GM12878 (cell line): ENCODE measurements at regions of chr12 and their contacts with region 1.

Region 1: DNA sequence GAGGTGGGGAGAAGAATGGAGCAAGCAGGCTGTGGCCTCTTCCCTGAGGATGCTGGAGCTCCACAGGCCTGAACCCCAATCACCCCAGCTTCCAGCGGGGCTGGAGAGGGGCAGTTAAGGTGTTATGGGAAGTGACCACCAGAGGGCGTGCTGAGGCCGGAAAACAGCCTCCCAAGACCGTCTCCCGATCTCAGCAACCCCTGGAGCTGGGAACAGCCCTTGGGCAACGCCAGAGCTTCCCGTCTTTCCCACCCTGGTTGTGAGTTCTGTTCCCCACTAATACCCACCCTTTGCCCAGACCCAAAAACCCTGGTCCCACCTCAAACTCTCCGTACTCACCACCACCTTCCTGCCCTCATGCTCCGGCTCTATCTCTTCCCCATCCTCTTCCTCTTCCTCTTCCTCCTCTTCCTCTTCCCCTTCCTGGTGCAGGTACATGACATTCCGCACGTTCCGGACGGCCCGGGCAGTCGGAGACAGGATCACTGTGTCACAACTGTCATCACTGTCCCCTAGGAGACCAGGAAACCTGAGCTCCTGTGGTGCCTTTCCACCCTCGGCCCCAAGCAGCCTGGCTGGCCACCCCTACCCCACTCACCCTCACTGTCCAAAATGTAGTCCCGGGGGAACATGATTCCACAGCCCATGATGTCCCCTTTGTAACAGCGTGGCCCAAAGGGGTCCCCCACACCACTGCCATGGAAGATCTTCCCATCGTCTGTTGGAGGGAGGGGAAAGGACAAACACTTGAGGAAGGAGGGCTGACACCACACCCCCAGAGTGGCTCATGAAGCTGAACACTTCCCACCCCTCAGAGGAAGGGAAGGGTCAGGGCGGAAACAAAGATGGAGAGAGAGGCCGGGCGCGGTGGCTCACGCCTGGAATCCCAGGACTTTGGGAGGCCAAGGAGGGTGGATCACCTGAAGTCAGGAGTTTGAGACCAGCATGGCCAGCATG is 12.9 kb downstream of the SPRYD3 start:
- DNase-seq: no peak
- ATAC-seq: peak; percentile 90
- H3K4me3 ChIP-seq: no peak overlapping the region
- H3K27ac ChIP-seq: no peak overlapping the region
- H3K4me1 ChIP-seq: no peaks in the 10 kb centered on the region
- H3K27me3 ChIP-seq: no peaks in the 10 kb centered on the region
- CTCF ChIP-seq: peak; percentile 72 to 85 (median 85)
- EP300 ChIP-seq: no peak
- POLR2A ChIP-seq: no peak
- RAD21 ChIP-seq: peak; percentile 75

Region 2: DNA sequence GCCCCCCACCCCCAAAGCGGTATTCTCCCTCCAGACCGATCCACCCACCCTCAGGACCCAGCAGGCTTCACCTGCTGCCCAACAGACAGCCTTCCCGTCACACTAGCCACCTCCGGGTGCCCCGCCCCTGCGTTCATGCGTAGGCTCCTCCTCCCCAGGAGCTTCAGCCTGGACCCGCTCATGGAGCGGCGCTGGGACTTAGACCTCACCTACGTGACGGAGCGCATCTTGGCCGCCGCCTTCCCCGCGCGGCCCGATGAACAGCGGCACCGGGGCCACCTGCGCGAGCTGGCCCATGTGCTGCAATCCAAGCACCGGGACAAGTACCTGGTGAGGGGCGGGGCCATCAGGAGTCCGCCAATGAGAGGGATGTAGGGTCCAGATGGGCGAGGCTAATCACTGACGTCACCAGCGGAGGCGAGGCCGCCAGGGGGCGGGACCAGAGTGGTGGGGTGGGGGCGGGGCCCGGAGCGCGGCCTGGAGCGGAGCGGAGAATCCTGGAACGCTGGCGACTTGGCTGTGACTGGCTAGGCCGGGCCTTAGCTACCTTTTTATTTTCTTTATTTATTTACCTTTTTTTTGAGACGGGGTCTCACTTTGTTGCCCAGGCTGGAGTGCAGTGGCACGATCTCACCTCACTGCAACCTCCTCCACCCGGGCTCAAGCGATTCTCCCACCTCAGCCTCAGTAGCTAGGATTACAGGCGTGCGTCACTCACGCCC is 12.0 kb before region 1 on chr12:
- CTCF ChIA-PET with region 1: interaction called, 38 read pairs
- POLR2A ChIA-PET with region 1: interaction called, 3 read pairs
- RAD21 ChIA-PET with region 1: interaction called, 9 read pairs
- SMC1A ChIA-PET with region 1: interaction called, 3 read pairs
- in situ Hi-C with region 1: no loop called
- intact Hi-C with region 1: no loop called
- DNase-seq: peak; percentile 61
- ATAC-seq: peak; percentile 92
- H3K4me3 ChIP-seq: peak overlapping the region; percentile 80
- H3K27ac ChIP-seq: no peak overlapping the region
- H3K4me1 ChIP-seq: peaks cover 8% of the 10 kb centered on the region
- H3K27me3 ChIP-seq: no peaks in the 10 kb centered on the region
- CTCF ChIP-seq: peak in 1 of 3 experiments; percentile 4; a peak in 1 of 6 replicates
- EP300 ChIP-seq: no peak
- POLR2A ChIP-seq: peak; percentile 67; the same call in 1 of the 2 replicates
- RAD21 ChIP-seq: no peak

Region 3: DNA sequence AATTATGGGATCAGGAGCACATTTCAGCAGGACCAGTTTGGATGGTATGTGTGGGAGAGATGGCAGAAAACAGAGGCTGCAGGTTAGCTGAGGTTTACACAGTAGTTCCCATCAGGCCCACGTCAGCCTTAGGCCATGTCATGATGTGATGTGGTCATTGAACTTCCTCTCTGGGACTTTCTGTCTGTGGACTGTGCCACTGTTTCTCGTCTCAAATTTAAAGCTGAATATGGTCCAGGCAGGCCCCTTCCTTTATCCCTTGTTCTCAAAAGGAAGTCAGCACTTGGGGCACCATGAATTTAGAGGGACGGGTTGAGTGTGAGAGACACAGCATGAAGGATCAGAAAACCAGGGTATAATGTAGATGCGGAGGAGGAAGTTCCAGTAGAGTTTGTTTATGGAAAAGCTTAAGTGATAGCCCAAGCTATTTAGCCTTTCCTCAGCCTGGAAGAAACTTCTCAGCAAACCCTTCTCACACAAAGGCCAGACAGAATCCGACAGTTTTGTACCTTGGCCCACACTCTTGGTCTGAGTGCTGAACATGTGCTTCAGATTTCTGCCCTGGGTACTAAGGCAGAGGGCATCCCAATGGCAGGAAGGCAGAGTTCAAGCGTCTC is 27.6 kb after region 1 on chr12:
- CTCF ChIA-PET with region 1: interaction called, 355 read pairs
- POLR2A ChIA-PET with region 1: interaction called, 7 read pairs
- RAD21 ChIA-PET with region 1: interaction called, 84 read pairs
- SMC1A ChIA-PET with region 1: interaction called, 126 read pairs
- in situ Hi-C with region 1: no loop called
- intact Hi-C with region 1: loop called (anchors 1 kb)
- DNase-seq: no peak
- ATAC-seq: peak; percentile 68
- H3K4me3 ChIP-seq: no peak overlapping the region
- H3K27ac ChIP-seq: no peak overlapping the region
- H3K4me1 ChIP-seq: peaks cover 6% of the 10 kb centered on the region
- H3K27me3 ChIP-seq: peaks cover 0 to 3% of the 10 kb centered on the region in 2 experiments; a peak in 3 of 4 replicates
- CTCF ChIP-seq: no peak
- EP300 ChIP-seq: no peak
- POLR2A ChIP-seq: no peak
- RAD21 ChIP-seq: no peak

Region 4: GRCh38 chr12:53287741-53288216 is 221.5 kb after region 1 on chr12:
- CTCF ChIA-PET with region 1: interaction called, 10 read pairs
- POLR2A ChIA-PET with region 1: no interaction called
- RAD21 ChIA-PET with region 1: interaction called, 4 read pairs
- SMC1A ChIA-PET with region 1: interaction called, 5 read pairs
- in situ Hi-C with region 1: no loop called
- intact Hi-C with region 1: loop called (anchors 1 kb)
- DNase-seq: peak; percentile 17
- ATAC-seq: peak; percentile 99
- H3K4me3 ChIP-seq: no peak overlapping the region
- H3K27ac ChIP-seq: no peak overlapping the region
- H3K4me1 ChIP-seq: no peaks in the 10 kb centered on the region
- H3K27me3 ChIP-seq: no peaks in the 10 kb centered on the region
- CTCF ChIP-seq: peak; percentile 76 to 80 (median 78)
- EP300 ChIP-seq: no peak
- POLR2A ChIP-seq: no peak
- RAD21 ChIP-seq: peak; percentile 84

Region 5: GRCh38 chr12:53344824-53345485 is 278.7 kb after region 1 on chr12:
- CTCF ChIA-PET with region 1: interaction called, 13 read pairs
- POLR2A ChIA-PET with region 1: no interaction called
- RAD21 ChIA-PET with region 1: interaction called, 3 read pairs
- SMC1A ChIA-PET with region 1: interaction called, 3 read pairs
- in situ Hi-C with region 1: no loop called
- intact Hi-C with region 1: no loop called
- DNase-seq: no peak
- ATAC-seq: peak; percentile 95
- H3K4me3 ChIP-seq: peak overlapping the region; percentile 80
- H3K27ac ChIP-seq: no peak overlapping the region
- H3K4me1 ChIP-seq: peaks cover 5% of the 10 kb centered on the region
- H3K27me3 ChIP-seq: peaks cover 0 to 5% of the 10 kb centered on the region in 2 experiments; a peak in 1 of 4 replicates
- CTCF ChIP-seq: peak; percentile 68 to 90 (median 87)
- EP300 ChIP-seq: no peak
- POLR2A ChIP-seq: 0 out of 2 replicates have a peak, but pooled peaks have one; percentile 32
- RAD21 ChIP-seq: peak; percentile 81